H1 (cell line): ENCODE measurements at regions of chr14 and their contacts with region 1.

Region 1: DNA sequence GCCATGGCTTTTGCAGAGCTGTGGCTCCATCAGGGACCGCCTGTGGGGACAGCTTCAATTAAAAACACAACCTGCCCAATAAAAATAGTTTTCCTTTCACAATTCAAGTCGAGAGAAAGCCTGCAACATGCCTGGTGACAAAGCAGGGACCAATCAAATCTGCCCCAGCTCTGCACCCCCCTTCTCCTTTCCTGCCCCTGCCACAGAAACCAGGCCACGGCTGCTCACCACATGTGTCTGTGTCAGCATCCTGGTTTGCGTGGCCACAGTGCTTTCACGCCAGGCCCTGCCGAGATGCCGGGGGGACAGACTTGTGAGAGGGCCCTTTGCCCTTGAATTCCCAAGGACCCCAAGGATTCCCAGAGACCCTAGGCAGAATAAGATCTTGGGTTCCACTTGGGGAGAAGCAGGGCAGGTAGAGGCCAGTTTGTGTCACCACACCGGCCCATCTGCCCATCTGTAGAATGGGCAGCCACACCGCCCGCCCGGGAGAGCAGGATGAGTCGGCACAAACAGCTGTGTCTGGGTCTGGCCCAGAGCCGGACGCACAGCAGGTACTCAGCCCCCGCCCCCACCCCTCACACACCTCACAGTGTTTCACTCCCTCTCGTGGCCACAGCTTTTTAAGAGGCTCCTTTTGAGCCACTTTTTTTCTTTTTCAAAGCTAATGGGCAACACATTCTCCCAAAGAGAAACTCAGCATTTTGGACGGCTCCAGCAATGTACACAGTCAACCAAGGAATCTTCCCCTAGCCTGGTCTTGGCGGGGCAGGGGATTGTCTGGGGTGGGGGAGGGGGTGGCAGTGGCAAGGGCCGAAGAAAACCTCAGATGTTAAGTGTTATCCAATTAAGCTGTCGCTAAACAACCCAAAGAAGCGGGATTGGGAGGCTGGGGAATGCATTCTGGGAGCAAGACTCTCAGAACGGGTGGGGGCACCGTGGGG is 41.5 kb downstream of the BCL11B start:
- DNase-seq: no peak
- H3K4me3 ChIP-seq: peak overlapping the region; percentile 36 to 60 (median 38); a peak in 6 of 8 replicates
- H3K27ac ChIP-seq: no peak overlapping the region
- H3K4me1 ChIP-seq: peaks cover 4 to 18% (median 14%) of the 10 kb centered on the region in 4 experiments
- H3K27me3 ChIP-seq: no peaks in the 10 kb centered on the region
- CTCF ChIP-seq: no peak
- EP300 ChIP-seq: no peak
- POLR2A ChIP-seq: no peak
- RAD21 ChIP-seq: peak in 1 of 2 experiments; percentile 7; a peak in 1 of 4 replicates

Region 2: GRCh38 chr14:99245564-99246511 is 15.4 kb after region 1 on chr14:
- CTCF ChIA-PET with region 1: interaction called, 8 read pairs
- POLR2A ChIA-PET with region 1: interaction called, 28 read pairs
- DNase-seq: peak in 1 of 2 experiments; percentile 87
- H3K4me3 ChIP-seq: peak overlapping the region; percentile 51 to 75 (median 66)
- H3K27ac ChIP-seq: peak overlapping the region; percentile 95
- H3K4me1 ChIP-seq: peaks cover 21 to 51% (median 43%) of the 10 kb centered on the region in 4 experiments
- H3K27me3 ChIP-seq: peaks cover 0 to 7% (median 3%) of the 10 kb centered on the region in 4 experiments; a peak in 4 of 7 replicates
- CTCF ChIP-seq: no peak
- EP300 ChIP-seq: peak in 1 of 2 experiments; percentile 64; a peak in 1 of 3 replicates
- POLR2A ChIP-seq: peak in 1 of 2 experiments; percentile 44; a peak in 2 of 3 replicates
- RAD21 ChIP-seq: no peak